ENCODE measurements at regions of chr5 and their contacts with region 1.

Region 1: GRCh38 chr5:86968301-86968753 is 299.4 kb upstream of the RASA1 start:
- DNase-seq: peak; percentile 76
- H3K4me3 ChIP-seq: peak overlapping the region in 1 of 3 experiments; percentile 27
- H3K27ac ChIP-seq: no peak overlapping the region
- H3K4me1 ChIP-seq: peaks cover 7% of the 10 kb centered on the region
- H3K27me3 ChIP-seq: no peaks in the 10 kb centered on the region
- CTCF ChIP-seq: peak; percentile 11 to 19
- POLR2A ChIP-seq: no peak

Region 2: GRCh38 chr5:86880785-86881492 is 87.4 kb before region 1 on chr5:
- CTCF ChIA-PET with region 1: interaction called, 152 read pairs
- POLR2A ChIA-PET with region 1: no interaction called
- dilution Hi-C with region 1: no loop called
- intact Hi-C with region 1: loop called (anchors 1 kb)
- DNase-seq: peak; percentile 69
- H3K4me3 ChIP-seq: no peak overlapping the region
- H3K27ac ChIP-seq: no peak overlapping the region
- H3K4me1 ChIP-seq: no peaks in the 10 kb centered on the region
- H3K27me3 ChIP-seq: no peaks in the 10 kb centered on the region
- CTCF ChIP-seq: peak; percentile 61 to 66
- POLR2A ChIP-seq: no peak

Region 3: GRCh38 chr5:86951761-86952160 is 16.6 kb before region 1 on chr5:
- CTCF ChIA-PET with region 1: interaction called, 10 read pairs
- POLR2A ChIA-PET with region 1: no interaction called
- dilution Hi-C with region 1: no loop called
- intact Hi-C with region 1: no loop called
- DNase-seq: no peak
- H3K4me3 ChIP-seq: no peak overlapping the region
- H3K27ac ChIP-seq: no peak overlapping the region
- H3K4me1 ChIP-seq: no peaks in the 10 kb centered on the region
- H3K27me3 ChIP-seq: peaks cover 0 to 12% of the 10 kb centered on the region in 2 experiments
- CTCF ChIP-seq: no peak
- POLR2A ChIP-seq: no peak

Region 4: DNA sequence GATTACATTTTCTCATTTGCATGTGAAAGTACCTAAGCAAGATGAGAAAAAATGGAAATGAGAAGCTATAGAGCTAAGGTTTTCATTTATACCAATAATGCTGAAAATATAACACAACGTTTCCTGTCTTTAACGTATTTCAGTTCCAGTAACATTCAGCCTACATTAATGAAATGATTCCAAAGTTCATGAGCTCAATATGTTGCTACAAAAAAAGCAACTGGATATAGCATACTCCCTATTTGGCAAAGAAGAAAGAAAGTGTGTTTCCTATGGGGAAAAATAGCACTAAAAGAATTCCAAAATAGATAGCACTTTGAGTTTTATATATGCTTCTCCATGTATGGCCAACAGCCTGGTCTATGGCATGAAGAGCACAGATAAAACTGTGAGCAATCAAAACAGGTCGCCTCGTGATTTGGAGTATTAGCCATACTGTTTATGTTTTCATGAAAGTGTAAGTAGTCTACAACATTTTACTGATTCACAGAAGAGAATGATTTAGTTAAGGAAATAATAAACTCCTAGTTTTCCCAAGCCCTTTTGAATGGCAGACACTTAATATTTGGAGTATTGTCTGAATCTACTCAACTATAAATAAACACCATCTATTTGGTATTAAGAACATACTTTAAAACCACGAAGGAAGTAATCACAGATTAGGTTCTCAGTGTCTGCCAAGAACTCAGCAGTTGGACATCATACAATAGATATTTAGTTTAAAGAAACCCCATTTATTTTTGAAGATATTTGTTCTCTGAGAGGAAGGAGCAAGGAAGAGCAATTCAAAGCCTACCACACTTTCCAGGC is 40.6 kb after region 1 on chr5:
- CTCF ChIA-PET with region 1: interaction called, 89 read pairs
- POLR2A ChIA-PET with region 1: no interaction called
- dilution Hi-C with region 1: no loop called
- intact Hi-C with region 1: loop called (anchors 1 kb)
- DNase-seq: no peak
- H3K4me3 ChIP-seq: no peak overlapping the region
- H3K27ac ChIP-seq: no peak overlapping the region
- H3K4me1 ChIP-seq: no peaks in the 10 kb centered on the region
- H3K27me3 ChIP-seq: no peaks in the 10 kb centered on the region
- CTCF ChIP-seq: no peak
- POLR2A ChIP-seq: no peak

Region 5: DNA sequence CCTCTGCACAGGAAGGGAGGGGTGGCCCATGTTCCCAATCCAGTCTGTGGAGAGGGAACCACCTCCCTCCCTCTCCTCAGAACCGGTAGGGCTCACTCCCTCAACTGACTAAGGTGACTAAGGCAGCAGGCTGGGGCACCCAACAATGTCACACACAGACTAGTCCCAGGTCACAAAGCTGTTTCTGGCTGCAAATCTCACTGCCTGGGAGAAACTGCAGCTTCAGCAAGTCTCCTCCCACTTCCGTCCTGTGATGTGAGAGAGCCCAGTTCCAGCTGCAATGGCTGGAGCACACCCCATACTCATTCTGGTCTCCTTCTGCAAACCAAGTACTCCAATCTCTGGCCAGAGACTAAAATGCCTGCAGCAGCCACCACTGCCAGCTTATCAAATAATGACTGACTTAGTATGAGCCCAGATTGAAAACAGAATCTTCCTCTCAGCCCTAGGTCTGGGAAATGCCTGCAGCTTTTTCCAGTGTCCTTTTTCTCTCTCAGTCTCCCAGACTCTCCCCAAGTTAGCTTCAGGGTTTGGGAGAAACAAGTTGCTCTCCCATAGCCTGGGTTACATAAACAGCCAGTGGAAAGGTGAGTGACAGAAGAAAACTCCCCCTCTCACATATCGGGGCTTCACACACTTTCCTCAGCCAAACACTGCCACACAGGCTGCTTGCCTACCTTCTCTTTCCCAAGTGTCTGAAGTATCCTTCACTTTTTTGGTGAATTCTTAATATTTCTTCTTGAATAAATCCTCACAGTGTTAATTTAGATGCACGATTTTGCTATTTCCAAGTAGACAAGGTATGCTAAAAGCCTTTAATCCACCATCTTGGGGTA is 52.0 kb after region 1 on chr5:
- CTCF ChIA-PET with region 1: interaction called, 89 read pairs
- POLR2A ChIA-PET with region 1: no interaction called
- dilution Hi-C with region 1: no loop called
- intact Hi-C with region 1: no loop called
- DNase-seq: no peak
- H3K4me3 ChIP-seq: no peak overlapping the region
- H3K27ac ChIP-seq: no peak overlapping the region
- H3K4me1 ChIP-seq: peaks cover 2% of the 10 kb centered on the region
- H3K27me3 ChIP-seq: peaks cover 1 to 3% of the 10 kb centered on the region in 2 experiments
- CTCF ChIP-seq: no peak
- POLR2A ChIP-seq: no peak